H1 (cell line): ENCODE measurements at regions of chr17 and their contacts with region 1.

Region 1: GRCh38 chr17:7561028-7561575 is 617 bp upstream of the SENP3 start:
- DNase-seq: peak in 1 of 2 experiments; percentile 92
- H3K4me3 ChIP-seq: peak overlapping the region; percentile 69 to 96 (median 78)
- H3K27ac ChIP-seq: peak overlapping the region; percentile 37; the same call in 1 of the 2 replicates
- H3K4me1 ChIP-seq: peaks cover 11 to 40% (median 24%) of the 10 kb centered on the region in 4 experiments
- H3K27me3 ChIP-seq: no peaks in the 10 kb centered on the region
- CTCF ChIP-seq: peak; percentile 86 to 90 (median 87)
- EP300 ChIP-seq: no peak
- POLR2A ChIP-seq: 0 out of 3 replicates have a peak, but pooled peaks of 1 of the 2 experiments have one; percentile 3
- RAD21 ChIP-seq: peak; percentile 83 to 88

Region 2: DNA sequence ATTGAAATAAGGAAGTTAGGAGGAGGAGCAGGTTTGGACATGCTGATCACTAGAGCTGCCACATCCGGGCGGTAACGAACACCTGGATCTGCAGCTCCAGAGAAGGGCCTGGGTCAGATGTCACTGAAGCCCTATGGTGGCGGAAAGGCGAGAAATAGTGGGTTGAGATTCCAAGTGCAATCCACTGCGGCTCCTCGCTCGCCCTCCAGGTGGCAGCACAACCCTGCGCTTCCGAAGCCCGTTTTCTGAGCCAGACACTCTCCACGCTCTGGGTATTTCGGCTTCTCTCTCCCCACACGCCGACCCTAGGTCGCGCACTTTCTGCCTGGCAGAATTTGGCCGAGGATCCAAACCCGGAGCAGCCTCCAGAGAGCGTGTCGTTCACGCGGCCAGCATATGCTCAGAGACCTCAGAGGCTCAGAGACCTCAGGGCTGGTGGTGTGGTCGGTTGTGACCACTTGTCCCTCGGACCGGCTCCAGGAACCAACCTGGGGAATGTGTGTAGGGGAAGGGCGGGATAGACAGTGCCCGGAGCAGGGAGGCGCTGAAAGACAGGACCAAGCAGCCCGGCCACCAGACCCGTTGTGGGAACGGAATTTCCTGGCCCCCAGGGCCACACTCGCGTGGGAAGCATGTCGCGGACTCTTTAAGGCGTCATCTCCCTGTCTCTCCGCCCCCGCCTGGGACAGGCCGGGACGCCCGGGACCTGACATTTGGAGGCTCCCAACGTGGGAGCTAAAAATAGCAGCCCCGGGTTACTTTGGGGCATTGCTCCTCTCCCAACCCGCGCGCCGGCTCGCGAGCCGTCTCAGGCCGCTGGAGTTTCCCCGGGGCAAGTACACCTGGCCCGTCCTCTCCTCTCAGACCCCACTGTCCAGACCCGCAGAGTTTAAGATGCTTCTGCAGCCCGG is 280.3 kb before region 1 on chr17:
- CTCF ChIA-PET with region 1: interaction called, 10 read pairs
- POLR2A ChIA-PET with region 1: no interaction called
- DNase-seq: peak; percentile 87 to 97
- H3K4me3 ChIP-seq: peak overlapping the region; percentile 14 to 77 (median 61)
- H3K27ac ChIP-seq: no peak overlapping the region
- H3K4me1 ChIP-seq: peaks cover 0 to 20% (median 8%) of the 10 kb centered on the region in 4 experiments; a peak in 5 of 7 replicates
- H3K27me3 ChIP-seq: peaks cover 0 to 13% (median 7%) of the 10 kb centered on the region in 4 experiments; a peak in 6 of 7 replicates
- CTCF ChIP-seq: peak; percentile 94 to 100 (median 97)
- EP300 ChIP-seq: peak in 1 of 2 experiments; percentile 10; a peak in 1 of 3 replicates
- POLR2A ChIP-seq: peak in 1 of 2 experiments; percentile 79; a peak in 2 of 3 replicates
- RAD21 ChIP-seq: peak; percentile 95 to 96

Region 3: GRCh38 chr17:7444682-7445618 is 116.2 kb before region 1 on chr17 and contains the start of gene CHRNB1:
- CTCF ChIA-PET with region 1: interaction called, 26 read pairs
- POLR2A ChIA-PET with region 1: no interaction called
- DNase-seq: peak in 1 of 2 experiments; percentile 94
- H3K4me3 ChIP-seq: peak within 1 kb of the TSS; percentile 39 to 73 (median 66)
- H3K27ac ChIP-seq: peak within 1 kb of the TSS; percentile 47; the same call in 1 of the 2 replicates
- H3K4me1 ChIP-seq: peaks cover 3 to 17% (median 13%) of the 10 kb centered on the region in 4 experiments
- H3K27me3 ChIP-seq: peaks cover 0 to 8% (median 6%) of the 10 kb centered on the region in 4 experiments; a peak in 6 of 7 replicates
- CTCF ChIP-seq: no peak
- EP300 ChIP-seq: no peak
- POLR2A ChIP-seq: no peak
- RAD21 ChIP-seq: no peak
- total RNA-seq, gene CHRNB1: 13.8 and 14.1 TPM in 2 replicates

Region 4: GRCh38 chr17:7502987-7503386 is 58.1 kb before region 1 on chr17:
- CTCF ChIA-PET with region 1: interaction called, 12 read pairs
- POLR2A ChIA-PET with region 1: interaction called, 9 read pairs
- DNase-seq: peak in 1 of 2 experiments; percentile 67
- H3K4me3 ChIP-seq: no peak overlapping the region
- H3K27ac ChIP-seq: no peak overlapping the region
- H3K4me1 ChIP-seq: no peaks in the 10 kb centered on the region
- H3K27me3 ChIP-seq: no peaks in the 10 kb centered on the region
- CTCF ChIP-seq: peak; percentile 51 to 68 (median 65)
- EP300 ChIP-seq: no peak
- POLR2A ChIP-seq: peak in 1 of 2 experiments; percentile 34; a peak in 2 of 3 replicates
- RAD21 ChIP-seq: peak; percentile 71 to 76

Region 5: GRCh38 chr17:7523033-7523432 is 38.1 kb before region 1 on chr17:
- CTCF ChIA-PET with region 1: interaction called, 251 read pairs
- POLR2A ChIA-PET with region 1: interaction called, 13 read pairs
- DNase-seq: peak; percentile 65 to 79
- H3K4me3 ChIP-seq: 0 out of 8 replicates have a peak overlapping the region, but pooled peaks of 1 of the 4 experiments have one; percentile 10
- H3K27ac ChIP-seq: no peak overlapping the region
- H3K4me1 ChIP-seq: no peaks in the 10 kb centered on the region
- H3K27me3 ChIP-seq: no peaks in the 10 kb centered on the region
- CTCF ChIP-seq: peak; percentile 32 to 76 (median 52)
- EP300 ChIP-seq: no peak
- POLR2A ChIP-seq: no peak
- RAD21 ChIP-seq: peak; percentile 31 to 42; a peak in 2 of 4 replicates

Region 6: DNA sequence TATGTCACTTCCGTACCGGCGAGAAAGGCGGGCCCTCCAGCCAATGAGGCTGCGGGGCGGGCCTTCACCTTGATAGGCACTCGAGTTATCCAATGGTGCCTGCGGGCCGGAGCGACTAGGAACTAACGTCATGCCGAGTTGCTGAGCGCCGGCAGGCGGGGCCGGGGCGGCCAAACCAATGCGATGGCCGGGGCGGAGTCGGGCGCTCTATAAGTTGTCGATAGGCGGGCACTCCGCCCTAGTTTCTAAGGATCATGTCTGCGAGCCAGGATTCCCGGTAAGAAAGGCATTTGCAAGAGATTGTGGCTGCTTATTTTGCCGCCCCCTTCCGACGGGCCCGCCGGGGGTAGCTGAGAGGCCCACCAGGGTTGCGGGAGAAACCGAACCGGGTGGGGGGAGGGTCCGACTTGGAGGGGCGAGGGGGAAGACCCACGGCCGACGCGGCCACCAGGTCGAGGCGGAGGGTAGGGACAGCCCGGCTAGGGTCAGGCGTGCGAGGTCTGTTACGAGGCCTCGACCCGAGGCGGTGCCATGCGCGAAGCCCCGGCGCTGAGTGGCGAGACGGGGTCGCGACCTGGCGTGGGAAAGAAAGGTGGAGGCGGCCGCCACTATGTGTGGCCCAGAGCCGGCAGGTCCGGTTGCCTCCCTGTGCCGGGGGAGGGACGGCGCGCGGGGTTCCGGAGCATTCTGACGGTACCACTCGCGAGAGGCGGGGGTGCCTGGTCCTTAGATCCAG is 11.7 kb after region 1 on chr17:
- CTCF ChIA-PET with region 1: interaction called, 33 read pairs
- POLR2A ChIA-PET with region 1: interaction called, 1,144 read pairs
- DNase-seq: peak; percentile 100
- H3K4me3 ChIP-seq: peak overlapping the region; percentile 97 to 99 (median 98)
- H3K27ac ChIP-seq: peak overlapping the region; percentile 99
- H3K4me1 ChIP-seq: peaks cover 4 to 10% (median 7%) of the 10 kb centered on the region in 4 experiments
- H3K27me3 ChIP-seq: no peaks in the 10 kb centered on the region
- CTCF ChIP-seq: no peak
- EP300 ChIP-seq: no peak
- POLR2A ChIP-seq: peak; percentile 96 to 98
- RAD21 ChIP-seq: no peak

Region 7: GRCh38 chr17:7644775-7645174 is 83.7 kb after region 1 on chr17:
- CTCF ChIA-PET with region 1: no interaction called
- POLR2A ChIA-PET with region 1: no interaction called
- DNase-seq: no peak
- H3K4me3 ChIP-seq: no peak overlapping the region
- H3K27ac ChIP-seq: no peak overlapping the region
- H3K4me1 ChIP-seq: no peaks in the 10 kb centered on the region
- H3K27me3 ChIP-seq: no peaks in the 10 kb centered on the region; a peak in 2 of 7 replicates
- CTCF ChIP-seq: no peak
- EP300 ChIP-seq: no peak
- POLR2A ChIP-seq: no peak
- RAD21 ChIP-seq: no peak

Region 8: DNA sequence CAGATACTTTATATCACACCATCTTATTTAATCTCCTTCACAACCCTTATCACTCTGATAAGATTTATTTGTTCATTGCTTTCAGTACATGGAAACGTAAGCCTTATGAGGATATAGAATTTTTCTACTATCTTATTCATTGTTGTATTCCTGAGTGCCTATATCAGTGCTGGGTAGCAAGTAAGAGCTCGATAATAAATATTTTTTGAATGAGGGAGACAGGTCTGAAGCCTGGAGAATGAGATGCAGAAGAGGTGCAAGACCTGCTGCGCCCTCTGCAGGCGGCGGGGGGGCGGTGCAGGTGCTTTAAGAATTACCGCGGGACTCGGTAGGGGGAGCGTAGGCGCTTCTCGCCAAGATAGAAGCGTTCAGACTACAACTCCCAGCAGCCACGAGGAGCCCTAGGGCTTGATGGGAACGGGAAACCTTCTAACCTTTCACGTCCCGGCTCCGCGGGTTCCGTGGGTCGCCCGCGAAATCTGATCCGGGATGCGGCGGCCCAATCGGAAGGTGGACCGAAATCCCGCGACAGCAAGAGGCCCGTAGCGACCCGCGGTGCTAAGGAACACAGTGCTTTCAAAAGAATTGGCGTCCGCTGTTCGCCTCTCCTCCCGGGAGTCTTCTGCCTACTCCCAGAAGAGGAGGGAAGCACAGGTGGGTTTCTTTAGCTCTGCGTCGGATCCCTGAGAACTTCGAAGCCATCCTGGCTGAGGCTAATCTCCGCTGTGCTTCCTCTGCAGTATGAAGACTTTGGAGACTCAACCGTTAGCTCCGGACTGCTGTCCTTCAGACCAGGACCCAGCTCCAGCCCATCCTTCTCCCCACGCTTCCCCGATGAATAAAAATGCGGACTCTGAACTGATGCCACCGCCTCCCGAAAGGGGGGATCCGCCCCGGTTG is 127.1 kb after region 1 on chr17 and contains the start of gene WRAP53:
- CTCF ChIA-PET with region 1: interaction called, 12 read pairs
- POLR2A ChIA-PET with region 1: interaction called, 12 read pairs
- DNase-seq: peak; percentile 95 to 99
- H3K4me3 ChIP-seq: peak within 1 kb of the TSS; percentile 75 to 100 (median 94)
- H3K27ac ChIP-seq: peak within 1 kb of the TSS; percentile 99
- H3K4me1 ChIP-seq: peaks cover 0 to 11% (median 4%) of the 10 kb centered on the region in 4 experiments; a peak in 4 of 7 replicates
- H3K27me3 ChIP-seq: no peaks in the 10 kb centered on the region
- CTCF ChIP-seq: peak; percentile 91 to 99 (median 93)
- EP300 ChIP-seq: no peak
- POLR2A ChIP-seq: peak in 1 of 2 experiments; percentile 77; a peak in 2 of 3 replicates
- RAD21 ChIP-seq: peak; percentile 83 to 85
- total RNA-seq, gene WRAP53: 29.3 and 30.1 TPM in 2 replicates

Region 9: DNA sequence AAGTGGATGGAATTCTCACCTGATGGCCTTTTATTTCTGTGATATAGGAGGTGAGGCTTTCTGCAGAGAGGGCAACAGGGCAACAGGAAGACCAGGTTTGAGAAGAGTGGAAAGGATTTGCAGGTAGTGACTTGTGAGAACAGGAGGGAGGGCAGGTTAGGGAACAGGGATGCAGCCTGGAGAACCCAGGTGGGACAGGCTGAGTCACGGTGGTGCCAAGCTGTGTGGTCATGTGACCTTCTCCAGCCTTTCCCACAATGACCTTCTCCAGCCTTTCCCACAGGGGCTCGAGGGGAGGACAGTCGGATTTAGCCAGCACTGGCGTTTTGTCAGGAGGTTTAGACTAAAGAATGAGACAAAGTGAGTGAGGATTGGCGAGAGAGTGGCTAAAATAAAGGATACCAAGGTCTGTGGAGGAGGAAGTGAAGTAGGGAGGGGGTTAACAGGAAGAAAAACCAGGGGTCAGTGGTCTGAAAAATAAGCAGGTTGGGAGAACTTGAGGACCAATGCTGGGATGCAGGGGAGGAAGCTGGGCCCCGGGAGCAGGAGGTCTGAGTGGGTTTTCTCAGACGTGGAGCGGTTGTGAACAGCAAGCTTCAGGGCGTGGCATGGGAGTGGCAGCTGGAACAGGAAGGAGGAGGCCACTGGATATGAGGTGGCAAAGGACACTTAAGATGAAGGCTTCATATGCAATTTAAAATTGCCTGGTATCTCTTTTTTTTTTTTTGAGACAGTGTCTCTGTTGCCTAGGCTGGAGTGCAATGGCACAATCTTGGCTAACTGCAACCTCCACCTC is 194.2 kb after region 1 on chr17:
- CTCF ChIA-PET with region 1: no interaction called
- POLR2A ChIA-PET with region 1: no interaction called
- DNase-seq: no peak
- H3K4me3 ChIP-seq: no peak overlapping the region
- H3K27ac ChIP-seq: no peak overlapping the region
- H3K4me1 ChIP-seq: no peaks in the 10 kb centered on the region; a peak in 1 of 7 replicates
- H3K27me3 ChIP-seq: no peaks in the 10 kb centered on the region; a peak in 1 of 7 replicates
- CTCF ChIP-seq: no peak
- EP300 ChIP-seq: no peak
- POLR2A ChIP-seq: no peak
- RAD21 ChIP-seq: no peak

Region 10: GRCh38 chr17:7915611-7916382 is 354.7 kb after region 1 on chr17 and contains the start of gene RNF227:
- CTCF ChIA-PET with region 1: no interaction called
- POLR2A ChIA-PET with region 1: no interaction called
- DNase-seq: peak in 1 of 2 experiments; percentile 92
- H3K4me3 ChIP-seq: peak within 1 kb of the TSS; percentile 30 to 53 (median 37)
- H3K27ac ChIP-seq: no peak within 1 kb of the TSS
- H3K4me1 ChIP-seq: peaks cover 0 to 6% (median 6%) of the 10 kb centered on the region in 4 experiments; a peak in 5 of 7 replicates
- H3K27me3 ChIP-seq: peaks cover 10 to 30% (median 26%) of the 10 kb centered on the region in 4 experiments
- CTCF ChIP-seq: no peak
- EP300 ChIP-seq: no peak
- POLR2A ChIP-seq: no peak
- RAD21 ChIP-seq: no peak
- total RNA-seq, gene RNF227: 0.63 and 0.77 TPM in 2 replicates